ENCODE measurements at regions of chr9 and their contacts with region 1.

Region 1: DNA sequence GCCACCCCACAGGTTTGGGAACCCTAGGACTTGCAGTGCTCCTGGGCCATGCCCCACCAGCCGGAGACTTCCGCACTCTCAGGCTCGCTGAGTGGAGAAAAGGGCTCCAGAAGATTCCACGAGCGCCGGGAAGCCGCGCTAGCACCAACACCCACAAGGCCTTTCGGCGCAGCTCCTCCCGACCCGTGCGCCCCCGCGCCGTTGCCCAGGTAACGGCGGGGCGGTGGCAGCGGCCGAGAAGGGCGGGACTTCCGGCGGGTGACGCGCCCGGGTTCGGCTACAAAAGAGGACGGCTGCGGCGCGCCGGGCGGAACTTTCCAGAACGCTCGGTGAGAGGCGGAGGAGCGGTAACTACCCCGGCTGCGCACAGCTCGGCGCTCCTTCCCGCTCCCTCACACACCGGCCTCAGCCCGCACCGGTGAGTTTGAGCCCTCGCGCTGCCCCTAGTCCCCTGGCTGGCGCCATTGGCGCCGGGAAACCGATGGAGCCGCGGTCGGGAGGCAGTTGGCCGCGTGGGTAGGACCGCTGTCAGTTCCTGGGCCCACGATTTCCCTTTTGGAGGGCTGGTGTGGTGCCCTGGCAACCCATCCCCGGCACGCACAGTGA is at the start of gene DNAJA1:
- DNase-seq: peak; percentile 96
- ATAC-seq: peak; percentile 83
- H3K4me3 ChIP-seq: peak within 1 kb of the TSS; percentile 74 to 100 (median 100)
- H3K4me3 Mint-ChIP-seq: peak within 1 kb of the TSS; percentile 97
- H3K27ac ChIP-seq: peak within 1 kb of the TSS; percentile 99
- H3K27ac Mint-ChIP-seq: peak within 1 kb of the TSS; percentile 95
- H3K4me1 ChIP-seq: peaks cover 17 to 34% of the 10 kb centered on the region in 2 donors
- H3K4me1 Mint-ChIP-seq: peaks cover 59% of the 10 kb centered on the region
- H3K27me3 ChIP-seq: no peaks in the 10 kb centered on the region
- H3K27me3 Mint-ChIP-seq: no peaks in the 10 kb centered on the region
- CTCF ChIP-seq: no peak
- total RNA-seq, gene DNAJA1: 66.6 and 68.6 TPM in 2 replicates

Region 2: GRCh38 chr9:32571969-32572899 is 452.8 kb before region 1 on chr9:
- CTCF ChIA-PET with region 1: no interaction called
- POLR2A ChIA-PET with region 1: no interaction called
- intact Hi-C with region 1: loop called (anchors 1 kb)
- DNase-seq: peak; percentile 84
- ATAC-seq: peak; percentile 79
- H3K4me3 ChIP-seq: peak overlapping the region; percentile 87 to 98 (median 94)
- H3K4me3 Mint-ChIP-seq: peak overlapping the region; percentile 100
- H3K27ac ChIP-seq: peak overlapping the region; percentile 82 to 83
- H3K27ac Mint-ChIP-seq: peak overlapping the region; percentile 98
- H3K4me1 ChIP-seq: peaks cover 15 to 17% of the 10 kb centered on the region in 2 donors
- H3K4me1 Mint-ChIP-seq: peaks cover 25% of the 10 kb centered on the region
- H3K27me3 ChIP-seq: no peaks in the 10 kb centered on the region
- H3K27me3 Mint-ChIP-seq: peaks cover 3% of the 10 kb centered on the region
- CTCF ChIP-seq: peak; percentile 88

Region 3: GRCh38 chr9:33076358-33077004 is 51.4 kb after region 1 on chr9 and contains the start of gene SMU1:
- CTCF ChIA-PET with region 1: no interaction called
- POLR2A ChIA-PET with region 1: interaction called, 6 read pairs
- intact Hi-C with region 1: loop called (anchors 1 kb)
- DNase-seq: peak; percentile 97
- ATAC-seq: peak; percentile 98
- H3K4me3 ChIP-seq: peak within 1 kb of the TSS; percentile 72 to 87 (median 84)
- H3K4me3 Mint-ChIP-seq: peak within 1 kb of the TSS; percentile 97
- H3K27ac ChIP-seq: peak within 1 kb of the TSS; percentile 91 to 95
- H3K27ac Mint-ChIP-seq: peak within 1 kb of the TSS; percentile 98
- H3K4me1 ChIP-seq: peaks cover 17 to 29% of the 10 kb centered on the region in 2 donors
- H3K4me1 Mint-ChIP-seq: peaks cover 34% of the 10 kb centered on the region
- H3K27me3 ChIP-seq: no peaks in the 10 kb centered on the region
- H3K27me3 Mint-ChIP-seq: no peaks in the 10 kb centered on the region
- CTCF ChIP-seq: no peak
- total RNA-seq, gene SMU1: 26.3 and 27.4 TPM in 2 replicates

Region 4: GRCh38 chr9:33264473-33265177 is 239.6 kb after region 1 on chr9 and contains the starts of genes BAG1 and CHMP5:
- CTCF ChIA-PET with region 1: no interaction called
- POLR2A ChIA-PET with region 1: interaction called, 5 read pairs
- intact Hi-C with region 1: loop called (anchors 1 kb)
- DNase-seq: peak; percentile 99
- ATAC-seq: peak; percentile 97
- H3K4me3 ChIP-seq: peak within 1 kb of the TSS; percentile 89 to 99 (median 97)
- H3K4me3 Mint-ChIP-seq: peak within 1 kb of the TSS; percentile 88
- H3K27ac ChIP-seq: peak within 1 kb of the TSS; percentile 92 to 96
- H3K27ac Mint-ChIP-seq: peak within 1 kb of the TSS; percentile 98
- H3K4me1 ChIP-seq: peaks cover 19 to 23% of the 10 kb centered on the region in 2 donors
- H3K4me1 Mint-ChIP-seq: peaks cover 39% of the 10 kb centered on the region
- H3K27me3 ChIP-seq: no peaks in the 10 kb centered on the region
- H3K27me3 Mint-ChIP-seq: no peaks in the 10 kb centered on the region
- CTCF ChIP-seq: peak; percentile 34
- total RNA-seq, gene BAG1: 53.8 and 60.2 TPM in 2 replicates
- total RNA-seq, gene CHMP5: 28.2 and 29.7 TPM in 2 replicates

Measured in B cell (primary cell).